Activated CD4-positive, alpha-beta T cell treated with anti-CD3 and anti-CD28 coated beads, Interleukin-2, amount 10 ng/mL, durations not matched to agents 24 days and 14 days (primary cell): ENCODE measurements at regions of chr17 and their contacts with region 1.

Region 1: GRCh38 chr17:66466840-66467367 is 164.5 kb downstream of the PRKCA start:
- DNase-seq: peak; percentile 85
- H3K4me3 Mint-ChIP-seq: peak overlapping the region; percentile 62
- H3K27ac Mint-ChIP-seq: peak overlapping the region; percentile 93
- H3K4me1 Mint-ChIP-seq: peaks cover 57% of the 10 kb centered on the region
- H3K27me3 Mint-ChIP-seq: no peaks in the 10 kb centered on the region

Region 2: DNA sequence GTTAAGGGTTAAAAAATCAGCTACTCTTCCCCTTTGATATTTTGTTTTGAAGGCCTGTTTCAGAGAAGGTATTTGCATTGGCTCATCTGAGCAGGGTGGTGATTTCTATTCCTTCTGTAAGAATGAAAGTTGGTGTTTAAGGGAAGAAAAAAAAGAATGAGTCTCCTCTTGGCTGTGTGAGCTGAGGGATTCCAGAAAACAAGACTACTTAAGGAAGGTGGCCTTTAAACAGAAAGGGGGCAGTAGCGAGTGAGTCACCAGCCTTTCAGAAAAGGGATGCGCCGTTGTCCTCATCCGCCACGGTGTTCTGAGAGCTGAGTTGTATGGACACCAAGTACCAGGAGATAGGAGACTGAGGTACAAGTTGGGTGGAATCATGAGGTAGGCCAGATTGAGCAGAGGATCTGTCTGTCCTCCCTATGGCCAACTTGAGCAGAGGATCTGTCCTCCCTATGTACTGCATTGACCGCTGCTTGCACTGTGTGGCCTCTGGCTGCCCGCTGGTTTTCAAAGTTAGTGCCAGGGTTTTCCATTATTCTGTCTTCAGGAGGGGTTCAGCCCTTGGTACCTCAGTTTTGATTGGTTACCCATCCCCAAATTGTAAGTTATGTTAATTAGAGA is 156.3 kb before region 1 on chr17:
- intact Hi-C with region 1: loop called (anchors 1 kb)
- DNase-seq: no peak
- H3K4me3 Mint-ChIP-seq: peak overlapping the region; percentile 77
- H3K27ac Mint-ChIP-seq: peak overlapping the region; percentile 80
- H3K4me1 Mint-ChIP-seq: peaks cover 82% of the 10 kb centered on the region
- H3K27me3 Mint-ChIP-seq: no peaks in the 10 kb centered on the region

Region 3: GRCh38 chr17:66397486-66397885 is 69.4 kb before region 1 on chr17:
- intact Hi-C with region 1: loop called (anchors 2 kb)
- DNase-seq: peak; percentile 62
- H3K4me3 Mint-ChIP-seq: peak overlapping the region; percentile 35
- H3K27ac Mint-ChIP-seq: peak overlapping the region; percentile 86
- H3K4me1 Mint-ChIP-seq: peaks cover 67% of the 10 kb centered on the region
- H3K27me3 Mint-ChIP-seq: no peaks in the 10 kb centered on the region

Region 4: DNA sequence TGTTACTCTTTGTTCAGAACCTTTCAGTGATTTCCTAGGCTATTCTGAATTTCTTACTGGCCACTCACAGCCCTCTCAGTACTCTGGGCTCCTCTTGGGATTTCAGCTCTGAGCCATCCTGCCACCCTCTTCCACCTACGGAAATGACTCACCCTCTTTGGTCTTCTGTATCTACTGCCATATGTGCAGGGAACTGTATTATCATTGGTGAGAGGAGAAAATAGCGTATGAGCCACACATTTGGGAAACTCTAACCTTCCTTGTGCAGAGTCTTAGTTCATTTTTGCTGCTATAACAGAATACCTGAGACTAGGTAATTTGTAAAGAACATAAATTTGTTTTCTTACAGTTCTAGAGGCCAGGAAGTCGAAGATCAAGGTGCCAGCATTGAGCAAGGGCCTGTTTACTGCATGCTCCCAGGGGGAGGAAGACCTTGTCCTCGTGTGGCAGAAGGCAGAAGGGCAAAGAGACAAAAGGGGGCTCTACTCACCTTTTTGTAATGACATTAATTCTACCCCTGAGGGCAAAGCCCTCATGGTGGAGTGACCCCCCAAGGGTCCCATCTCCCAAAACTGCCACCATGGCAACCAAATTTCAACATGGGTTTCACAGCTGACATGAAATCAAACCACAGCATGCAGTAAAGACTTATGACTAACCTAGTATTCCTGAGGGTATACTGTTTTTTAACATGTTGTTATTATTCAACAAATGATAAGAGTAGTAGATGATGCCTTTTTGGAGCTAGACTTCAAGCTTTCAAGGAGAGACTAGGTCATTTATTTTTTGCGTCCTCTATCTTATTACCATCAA is 27.3 kb after region 1 on chr17:
- intact Hi-C with region 1: loop called (anchors 1 kb)
- DNase-seq: peak; percentile 64
- H3K4me3 Mint-ChIP-seq: peak overlapping the region; percentile 2
- H3K27ac Mint-ChIP-seq: peak overlapping the region; percentile 62
- H3K4me1 Mint-ChIP-seq: peaks cover 45% of the 10 kb centered on the region
- H3K27me3 Mint-ChIP-seq: no peaks in the 10 kb centered on the region

Region 5: GRCh38 chr17:66549731-66550207 is 82.9 kb after region 1 on chr17:
- intact Hi-C with region 1: loop called (anchors 1 kb)
- DNase-seq: no peak
- H3K4me3 Mint-ChIP-seq: no peak overlapping the region
- H3K27ac Mint-ChIP-seq: no peak overlapping the region
- H3K4me1 Mint-ChIP-seq: peaks cover 45% of the 10 kb centered on the region
- H3K27me3 Mint-ChIP-seq: no peaks in the 10 kb centered on the region